Activated T-helper 1 cell treated with anti-CD3 and anti-CD28 coated beads, Interleukin-12 subunit alpha, Interleukin-12 subunit beta, Interleukin-2, Interleukin-4 antibody, amounts not matched to agents 30 ng/mL and 10 ng/mL and 1 ng/mL, durations not matched to agents 14 hours and 24 hours and 36 hours (primary cell): ENCODE measurements at regions of chr12 and their contacts with region 1.

Region 1: DNA sequence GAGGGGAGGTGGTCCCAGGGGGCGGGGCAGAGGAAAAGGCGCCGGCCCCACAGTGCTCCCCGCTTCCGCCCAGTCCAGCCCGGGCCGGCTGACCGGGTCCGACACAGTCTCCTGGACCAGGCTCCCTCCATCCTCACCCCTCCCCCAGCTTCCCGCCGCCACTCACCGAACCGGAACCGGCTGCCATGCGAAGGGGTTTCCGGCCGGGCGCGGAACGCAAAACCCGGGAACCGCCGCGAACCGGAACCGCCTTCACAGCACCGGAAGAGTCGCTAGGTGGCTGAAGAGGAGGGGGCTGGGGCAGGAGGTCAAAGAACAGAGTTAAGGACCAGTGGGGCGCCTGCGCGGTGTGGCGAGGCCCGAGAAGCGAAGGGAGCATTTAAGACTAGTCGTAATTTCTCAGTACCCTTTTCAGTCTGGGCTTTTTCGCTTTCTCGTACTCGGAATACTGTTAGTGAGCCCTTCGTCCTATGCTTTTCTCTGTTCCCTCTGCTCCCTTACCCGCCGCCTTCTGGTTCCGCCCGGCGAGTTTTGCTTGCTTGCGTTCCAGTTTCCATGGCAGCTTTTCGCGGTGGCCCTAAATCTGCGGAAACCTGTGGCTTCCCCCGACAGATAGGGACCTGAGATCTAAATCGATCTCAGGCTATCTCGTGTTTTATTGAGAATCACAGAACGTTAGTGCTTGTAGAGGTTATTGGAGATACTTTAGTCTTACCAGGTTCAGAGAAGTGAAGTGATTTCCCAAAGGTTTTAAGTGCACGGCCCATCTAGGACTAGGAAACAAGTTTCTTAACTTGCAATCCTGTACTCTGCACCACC is at the start of gene SENP1:
- DNase-seq: peak; percentile 87
- H3K4me3 Mint-ChIP-seq: peak within 1 kb of the TSS; percentile 97
- H3K27ac Mint-ChIP-seq: peak within 1 kb of the TSS; percentile 96
- H3K4me1 Mint-ChIP-seq: peaks cover 48% of the 10 kb centered on the region
- H3K27me3 Mint-ChIP-seq: peaks cover 5% of the 10 kb centered on the region
- total RNA-seq, gene SENP1: 51.3 and 52.2 TPM in 2 replicates

Region 2: DNA sequence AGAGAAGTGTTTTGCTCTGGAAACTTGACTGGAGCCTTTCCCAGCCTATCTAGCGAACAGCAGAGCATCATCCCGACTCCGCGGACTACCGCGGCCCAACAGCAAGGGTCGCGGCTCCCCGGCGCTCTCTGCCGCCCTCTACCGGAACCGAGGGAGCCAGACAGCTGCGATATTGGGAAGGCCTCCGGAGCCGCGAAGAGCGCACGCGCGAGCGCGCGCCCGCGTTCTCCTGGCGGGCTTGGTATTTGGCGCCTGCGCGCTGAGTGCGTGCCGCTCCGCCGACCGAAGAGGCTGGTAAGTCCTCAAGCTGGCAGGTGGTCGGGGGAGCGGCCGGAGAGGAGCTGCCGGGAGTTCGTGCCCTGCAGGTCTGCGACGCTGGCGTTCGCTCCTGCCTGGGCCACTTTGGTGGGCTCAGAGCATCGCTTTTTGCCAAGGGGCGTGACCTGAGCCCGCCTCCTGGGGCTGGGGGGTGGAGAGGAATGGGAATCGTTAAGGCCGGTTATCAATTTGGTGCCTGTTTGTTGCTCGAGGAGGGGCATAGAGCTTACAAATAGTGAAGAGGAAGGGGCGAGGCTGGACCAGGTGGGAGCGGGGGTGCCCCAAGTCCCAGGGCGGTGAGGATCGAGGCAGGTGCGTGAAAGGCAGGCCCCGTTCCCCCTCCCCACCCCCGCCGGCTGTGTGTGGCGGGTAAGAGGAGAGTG is 142.6 kb before region 1 on chr12 and contains the start of gene TMEM106C:
- intact Hi-C with region 1: loop called (anchors 1 kb)
- DNase-seq: peak; percentile 90
- H3K4me3 Mint-ChIP-seq: peak within 1 kb of the TSS; percentile 99
- H3K27ac Mint-ChIP-seq: peak within 1 kb of the TSS; percentile 86
- H3K4me1 Mint-ChIP-seq: peaks cover 41% of the 10 kb centered on the region
- H3K27me3 Mint-ChIP-seq: peaks cover 17% of the 10 kb centered on the region
- total RNA-seq, gene TMEM106C: 139 and 143 TPM in 2 replicates

Region 3: DNA sequence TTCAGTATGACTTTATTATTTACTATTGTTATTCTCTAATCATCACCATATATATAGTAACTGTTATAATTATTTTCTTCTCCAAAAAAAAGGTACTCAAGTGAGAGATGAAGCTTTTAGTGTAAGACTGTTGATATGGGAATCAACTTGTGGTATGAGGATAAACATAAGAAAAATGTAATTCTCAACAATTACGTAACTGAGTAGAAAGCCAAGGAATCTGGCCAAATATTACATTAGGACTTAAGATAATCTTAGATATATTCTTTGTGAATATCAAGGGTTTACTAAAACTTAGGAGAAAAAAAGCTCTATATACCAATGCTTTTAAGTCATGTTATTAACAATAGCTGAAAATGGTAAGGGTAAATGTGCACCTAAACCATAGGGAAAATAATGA is 13.5 kb before region 1 on chr12:
- intact Hi-C with region 1: no loop called
- DNase-seq: no peak
- H3K4me3 Mint-ChIP-seq: no peak overlapping the region
- H3K27ac Mint-ChIP-seq: no peak overlapping the region
- H3K4me1 Mint-ChIP-seq: no peaks in the 10 kb centered on the region
- H3K27me3 Mint-ChIP-seq: no peaks in the 10 kb centered on the region

Region 4: DNA sequence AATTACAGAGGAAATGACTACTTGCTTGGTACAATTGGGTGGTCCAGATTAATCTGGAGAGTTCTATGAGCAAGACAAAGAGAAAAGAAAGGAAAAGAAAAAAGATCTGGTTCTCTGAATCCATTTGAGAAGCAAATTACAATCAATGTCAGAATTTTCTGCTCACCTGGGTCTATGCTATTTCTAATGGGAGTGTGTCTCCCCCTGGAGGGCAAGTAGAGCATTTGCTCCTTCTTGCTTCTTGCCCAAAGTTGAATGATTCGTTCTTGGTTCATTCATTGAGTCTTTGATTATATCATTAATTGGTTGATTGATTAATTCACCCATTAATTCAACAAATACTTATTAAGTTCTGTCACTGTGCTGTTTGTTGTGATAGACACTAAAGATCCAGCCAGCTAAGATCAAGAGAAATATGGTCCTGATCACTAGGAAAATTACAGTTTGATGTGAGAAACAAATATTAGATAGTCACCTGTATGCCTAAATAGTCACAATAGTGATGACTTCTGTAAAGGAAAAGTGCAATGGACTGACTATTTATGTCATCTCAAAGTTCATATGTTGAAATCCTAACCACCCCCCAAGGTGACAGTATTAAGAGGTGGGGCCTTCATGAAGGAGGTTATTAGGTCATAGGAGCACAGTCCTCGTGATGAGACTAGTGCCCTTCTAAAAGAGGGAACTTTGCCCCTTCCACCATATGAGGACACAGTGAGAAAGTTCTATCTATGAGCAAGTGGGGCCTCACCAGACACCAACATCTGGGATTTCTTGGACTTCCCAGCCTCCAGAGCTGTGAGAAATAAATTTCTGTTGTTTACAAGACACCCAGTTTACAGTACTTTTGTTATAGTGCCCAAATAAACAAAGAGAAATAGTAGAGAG is 59.3 kb after region 1 on chr12:
- intact Hi-C with region 1: loop called (anchors 2 kb)
- DNase-seq: peak; percentile 34
- H3K4me3 Mint-ChIP-seq: no peak overlapping the region
- H3K27ac Mint-ChIP-seq: no peak overlapping the region
- H3K4me1 Mint-ChIP-seq: peaks cover 6% of the 10 kb centered on the region
- H3K27me3 Mint-ChIP-seq: peaks cover 23% of the 10 kb centered on the region

Region 5: DNA sequence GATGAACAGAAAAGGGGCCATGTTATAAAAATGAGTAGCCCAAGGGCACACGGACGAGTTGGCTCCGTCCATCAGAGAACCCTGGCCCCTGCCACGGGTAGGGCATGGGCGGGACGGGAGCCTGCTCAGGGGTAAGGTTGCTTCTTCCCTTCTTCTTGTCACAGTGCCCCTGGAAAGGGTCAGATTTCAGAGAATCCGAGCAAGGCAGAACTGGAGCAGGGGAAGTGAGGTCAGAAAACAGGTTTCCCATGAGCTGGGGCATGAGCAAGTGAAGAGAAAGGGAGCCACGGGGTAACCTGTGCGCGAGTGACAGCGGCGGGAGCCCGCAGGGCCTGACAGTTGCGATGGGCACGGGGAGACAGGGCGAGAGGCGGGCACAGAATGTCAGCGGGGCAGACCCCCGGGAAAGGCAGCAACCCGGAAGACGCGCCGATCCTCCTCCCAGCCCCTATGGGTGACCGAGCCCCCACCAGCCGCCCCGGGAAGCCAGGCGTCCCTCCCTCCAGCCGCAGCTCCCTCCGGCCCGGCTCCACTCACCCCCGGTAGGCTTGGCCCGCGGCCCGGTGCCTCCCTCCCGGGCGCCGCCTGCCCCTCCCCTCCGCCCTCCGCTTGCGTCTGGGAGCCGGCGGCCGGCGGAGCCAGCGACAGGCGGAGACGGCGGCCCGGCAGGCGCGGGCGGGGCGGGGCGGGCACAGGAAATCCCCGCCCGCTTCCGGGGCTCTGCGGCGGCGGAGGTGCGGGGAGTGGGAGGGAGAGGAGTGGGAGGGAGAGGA is 244.4 kb after region 1 on chr12 and contains the start of gene ZNF641:
- intact Hi-C with region 1: loop called (anchors 5 kb)
- DNase-seq: peak; percentile 83
- H3K4me3 Mint-ChIP-seq: peak within 1 kb of the TSS; percentile 94
- H3K27ac Mint-ChIP-seq: peak within 1 kb of the TSS; percentile 94
- H3K4me1 Mint-ChIP-seq: peaks cover 27% of the 10 kb centered on the region
- H3K27me3 Mint-ChIP-seq: peaks cover 13% of the 10 kb centered on the region
- total RNA-seq, gene ZNF641: 7.0 and 7.1 TPM in 2 replicates

Region 6: DNA sequence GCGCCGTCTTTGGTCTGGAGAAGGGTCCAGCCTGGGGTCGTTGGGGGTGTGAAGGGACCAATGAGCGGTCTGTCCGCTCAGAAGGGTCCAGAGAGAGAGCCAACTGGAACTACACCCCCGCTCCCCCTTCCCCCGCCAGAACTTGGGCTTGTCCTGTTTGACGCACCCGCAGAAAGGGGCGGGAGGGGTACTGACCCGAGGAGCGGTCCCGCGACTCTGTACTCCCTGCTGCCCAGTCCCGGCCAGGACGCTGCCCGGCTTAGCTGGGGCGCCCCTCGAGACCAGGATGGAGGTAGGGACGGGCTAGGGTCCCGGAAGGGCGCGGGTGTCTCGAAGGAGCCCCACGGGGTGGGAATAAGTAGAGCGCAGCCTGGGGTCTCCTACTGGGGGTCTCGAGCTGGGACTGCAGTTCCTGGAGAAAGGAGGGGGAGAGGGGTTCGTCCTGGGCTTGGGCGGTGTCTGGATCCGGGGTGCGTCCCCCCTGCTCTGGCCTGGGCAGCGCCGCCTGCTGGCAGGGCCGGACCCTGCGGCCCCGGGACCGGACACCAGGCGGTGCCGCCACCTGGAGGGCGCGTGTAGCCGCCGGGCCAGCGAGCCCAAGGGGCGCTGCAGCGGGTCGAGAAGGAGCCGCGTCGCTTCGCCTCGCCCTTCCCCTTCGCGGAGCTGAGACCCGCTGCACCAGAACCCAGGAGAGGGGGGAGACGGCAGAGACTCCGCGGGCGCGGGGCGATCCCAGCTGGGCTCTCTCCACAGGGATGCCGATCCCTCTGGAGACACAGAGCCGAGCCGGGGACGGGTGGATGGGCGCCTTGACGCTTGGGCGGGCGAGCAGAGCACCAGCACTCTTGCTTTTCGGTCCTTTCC is 708.4 kb after region 1 on chr12:
- intact Hi-C with region 1: loop called (anchors 10 kb)
- DNase-seq: peak; percentile 78
- H3K4me3 Mint-ChIP-seq: peak overlapping the region; percentile 93
- H3K27ac Mint-ChIP-seq: peak overlapping the region; percentile 55
- H3K4me1 Mint-ChIP-seq: peaks cover 28% of the 10 kb centered on the region
- H3K27me3 Mint-ChIP-seq: peaks cover 8% of the 10 kb centered on the region